Natural killer cell (primary cell): ENCODE measurements at regions of chr19 and their contacts with region 1.

Region 1: DNA sequence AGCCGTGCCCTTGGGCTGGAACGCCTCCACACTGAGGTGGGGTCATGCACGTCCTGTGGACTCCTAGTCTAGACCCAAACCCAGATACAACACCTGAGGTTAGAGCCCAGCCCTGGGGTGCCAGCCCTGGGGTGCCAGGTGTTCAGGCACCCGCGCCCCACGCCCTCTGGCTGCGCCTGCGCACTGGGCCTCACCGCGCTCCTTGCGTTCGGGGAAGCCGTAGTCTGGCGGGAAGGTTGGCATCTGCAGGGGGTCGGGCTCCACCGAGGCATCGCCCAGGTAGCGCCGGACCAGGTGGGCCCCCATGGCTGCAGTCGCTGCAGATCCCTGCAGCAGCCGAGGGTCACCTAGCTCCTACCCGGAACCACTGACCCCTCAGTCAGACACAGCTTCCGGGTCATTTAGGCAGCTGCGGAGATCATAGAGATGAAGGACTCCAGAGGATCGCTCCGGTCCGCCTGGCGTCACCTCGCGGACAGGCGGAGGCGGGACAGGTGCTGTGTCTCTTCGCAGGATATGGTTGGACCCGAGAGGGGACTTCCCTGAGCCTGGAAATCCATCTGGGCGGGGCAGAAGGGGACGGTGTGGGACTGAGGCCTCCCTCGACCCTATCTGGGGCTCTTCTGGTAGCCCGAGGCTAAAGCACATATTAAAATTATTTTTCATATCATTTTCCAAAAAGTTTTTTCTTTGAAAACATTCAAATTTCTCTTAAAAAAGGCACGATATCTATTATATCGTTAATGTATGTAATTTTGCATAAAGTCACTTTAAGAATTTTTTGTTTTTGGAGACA is at the start of gene NDUFB7:
- DNase-seq: peak; percentile 83 to 97
- ATAC-seq: peak; percentile 96 to 99 (median 97)
- H3K4me3 ChIP-seq: peak within 1 kb of the TSS; percentile 82
- H3K4me3 Mint-ChIP-seq: peak within 1 kb of the TSS; percentile 96
- H3K27ac ChIP-seq: peak within 1 kb of the TSS; percentile 21
- H3K27ac Mint-ChIP-seq: peak within 1 kb of the TSS; percentile 87 to 89
- H3K4me1 ChIP-seq: peaks cover 53% of the 10 kb centered on the region
- H3K4me1 Mint-ChIP-seq: peaks cover 32 to 43% of the 10 kb centered on the region in 2 donors
- H3K27me3 ChIP-seq: no peaks in the 10 kb centered on the region
- H3K27me3 Mint-ChIP-seq: no peaks in the 10 kb centered on the region
- CTCF ChIP-seq: peak; percentile 78
- total RNA-seq, gene NDUFB7: 97.1 to 120 (median 108) TPM

Region 2: DNA sequence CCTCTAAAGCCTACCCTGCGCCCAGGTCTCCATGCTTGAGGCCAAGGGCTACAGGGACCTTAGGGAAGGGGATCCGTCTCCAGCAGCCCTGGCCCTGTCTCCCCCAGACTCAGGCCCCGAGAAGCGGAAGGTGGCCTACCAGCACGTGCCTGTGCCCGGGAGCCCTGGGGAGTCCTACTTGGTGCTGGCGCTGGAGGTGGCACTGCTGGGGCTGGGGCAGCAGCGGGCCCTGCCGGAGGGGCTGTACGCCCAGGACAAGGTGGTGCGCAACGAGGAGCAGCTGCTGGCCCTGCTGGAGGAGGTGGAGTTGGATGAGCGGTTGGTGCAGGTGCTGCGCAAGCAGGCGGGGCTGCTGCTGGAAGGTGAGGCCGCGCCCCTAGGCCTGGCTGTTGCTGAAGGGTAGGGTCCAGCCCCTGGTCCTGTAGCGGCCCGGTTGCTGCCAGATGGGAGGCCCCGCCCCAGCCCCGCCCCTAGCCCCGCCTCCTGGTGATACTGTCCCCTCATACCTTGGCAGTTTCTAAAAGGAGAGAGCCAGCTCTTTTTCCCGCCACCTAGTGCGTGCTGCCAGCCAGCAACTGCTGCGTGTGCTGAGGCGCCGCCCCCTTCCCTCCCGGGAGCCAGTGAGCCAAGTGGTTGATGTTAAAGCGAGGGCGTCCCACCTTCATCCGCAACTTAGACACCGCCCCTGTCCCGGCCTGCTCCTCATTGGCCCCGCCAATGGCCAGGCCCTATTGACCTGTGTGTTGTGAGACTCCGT is 754.1 kb before region 1 on chr19:
- intact Hi-C with region 1: no loop called
- DNase-seq: peak in 1 of 2 donors; percentile 49
- ATAC-seq: peak; percentile 24 to 68 (median 66)
- H3K4me3 ChIP-seq: no peak overlapping the region
- H3K4me3 Mint-ChIP-seq: no peak overlapping the region
- H3K27ac ChIP-seq: no peak overlapping the region
- H3K27ac Mint-ChIP-seq: peak overlapping the region in 1 of 2 donors; percentile 49
- H3K4me1 ChIP-seq: no peaks in the 10 kb centered on the region
- H3K4me1 Mint-ChIP-seq: no peaks in the 10 kb centered on the region
- H3K27me3 ChIP-seq: no peaks in the 10 kb centered on the region
- H3K27me3 Mint-ChIP-seq: no peaks in the 10 kb centered on the region
- CTCF ChIP-seq: no peak

Region 3: GRCh38 chr19:14459703-14460102 is 112.2 kb before region 1 on chr19:
- intact Hi-C with region 1: no loop called
- DNase-seq: peak; percentile 74 to 75
- ATAC-seq: peak; percentile 97 to 99 (median 99)
- H3K4me3 ChIP-seq: no peak overlapping the region
- H3K4me3 Mint-ChIP-seq: peak overlapping the region; percentile 82
- H3K27ac ChIP-seq: peak overlapping the region; percentile 76
- H3K27ac Mint-ChIP-seq: peak overlapping the region; percentile 64 to 72
- H3K4me1 ChIP-seq: peaks cover 28% of the 10 kb centered on the region
- H3K4me1 Mint-ChIP-seq: peaks cover 31 to 34% of the 10 kb centered on the region in 2 donors
- H3K27me3 ChIP-seq: no peaks in the 10 kb centered on the region
- H3K27me3 Mint-ChIP-seq: no peaks in the 10 kb centered on the region
- CTCF ChIP-seq: no peak

Region 4: DNA sequence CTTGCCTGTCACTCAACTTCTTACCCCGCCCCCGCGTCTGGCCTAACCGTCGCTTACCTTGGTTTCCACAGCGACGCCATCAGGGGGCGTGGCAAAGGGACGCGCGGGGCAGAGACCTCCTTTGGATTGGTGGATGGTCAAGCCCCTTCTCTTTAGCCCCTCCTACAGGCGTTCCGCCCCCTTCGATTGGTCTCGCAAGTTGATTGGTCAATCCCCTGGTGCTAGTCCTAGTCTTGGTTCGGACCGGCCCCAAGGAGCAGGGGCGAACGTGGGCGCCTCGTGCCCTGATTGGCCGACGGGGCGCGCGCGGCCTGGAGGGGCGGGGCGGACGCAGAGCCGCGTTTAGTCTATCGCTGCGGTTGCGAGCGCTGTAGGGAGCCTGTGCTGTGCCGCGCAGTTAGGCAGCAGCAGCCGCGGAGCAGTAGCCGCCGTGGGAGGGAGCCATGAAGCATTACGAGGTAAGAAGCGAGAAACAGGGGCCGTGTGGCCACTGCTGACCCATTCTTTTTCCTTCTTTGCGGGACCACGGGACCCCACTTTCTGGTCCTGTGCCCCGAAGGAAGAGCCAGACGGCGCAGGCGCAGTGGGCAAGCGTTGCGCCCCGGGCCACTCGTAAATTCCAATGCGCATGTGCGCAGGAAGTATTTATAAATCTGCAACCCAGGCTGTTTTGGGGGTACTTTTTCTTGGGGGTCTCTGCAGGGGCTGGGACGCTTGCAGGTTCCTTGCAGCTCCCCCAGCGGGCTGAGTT is 42.5 kb before region 1 on chr19 and contains the start of gene TECR:
- intact Hi-C with region 1: no loop called
- DNase-seq: peak; percentile 99 to 100
- ATAC-seq: peak; percentile 93 to 99 (median 94)
- H3K4me3 ChIP-seq: peak within 1 kb of the TSS; percentile 64
- H3K4me3 Mint-ChIP-seq: peak within 1 kb of the TSS; percentile 96
- H3K27ac ChIP-seq: peak within 1 kb of the TSS; percentile 86
- H3K27ac Mint-ChIP-seq: peak within 1 kb of the TSS; percentile 95 to 97
- H3K4me1 ChIP-seq: peaks cover 20% of the 10 kb centered on the region
- H3K4me1 Mint-ChIP-seq: peaks cover 9 to 12% of the 10 kb centered on the region in 2 donors
- H3K27me3 ChIP-seq: no peaks in the 10 kb centered on the region
- H3K27me3 Mint-ChIP-seq: no peaks in the 10 kb centered on the region
- CTCF ChIP-seq: no peak
- total RNA-seq, gene TECR: 123 to 158 (median 131) TPM

Region 5: GRCh38 chr19:14686411-14686810 is 114.5 kb after region 1 on chr19:
- intact Hi-C with region 1: loop called (anchors 1 kb)
- DNase-seq: peak in 1 of 2 donors; percentile 50
- ATAC-seq: no peak
- H3K4me3 ChIP-seq: no peak overlapping the region
- H3K4me3 Mint-ChIP-seq: no peak overlapping the region
- H3K27ac ChIP-seq: no peak overlapping the region
- H3K27ac Mint-ChIP-seq: no peak overlapping the region
- H3K4me1 ChIP-seq: peaks cover 16% of the 10 kb centered on the region
- H3K4me1 Mint-ChIP-seq: peaks cover 0 to 16% of the 10 kb centered on the region in 2 donors
- H3K27me3 ChIP-seq: no peaks in the 10 kb centered on the region
- H3K27me3 Mint-ChIP-seq: peaks cover 0 to 4% of the 10 kb centered on the region in 2 donors
- CTCF ChIP-seq: peak; percentile 56

Region 6: DNA sequence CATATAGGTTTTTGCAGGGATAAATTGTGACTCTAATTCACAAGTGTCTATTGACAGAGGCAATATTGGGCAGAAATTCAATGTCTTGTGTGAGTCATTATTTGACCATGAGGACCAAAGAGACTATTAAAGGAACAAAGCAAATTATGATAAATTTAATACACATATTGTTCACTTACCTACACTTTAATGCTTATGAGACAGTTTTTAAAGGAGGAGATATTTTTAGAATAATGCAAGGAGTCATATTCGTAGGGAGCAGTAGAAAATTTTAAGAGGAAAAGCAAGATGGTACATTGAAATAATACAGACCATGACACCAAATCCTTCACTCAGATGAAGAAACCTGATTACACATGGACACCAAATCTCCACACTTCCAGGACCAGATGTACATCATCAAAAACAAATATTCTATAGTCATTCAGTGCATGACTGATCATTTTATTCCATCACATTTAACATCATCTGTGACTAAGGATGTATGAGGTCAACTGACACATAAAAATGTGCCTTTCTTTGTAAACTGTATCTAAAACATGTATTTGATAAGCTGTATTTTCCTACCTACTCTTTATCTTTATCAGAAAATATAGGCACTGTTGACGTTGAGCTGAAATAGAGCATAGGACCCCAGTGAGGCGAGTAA is 318.2 kb after region 1 on chr19:
- intact Hi-C with region 1: loop called (anchors 5 kb)
- DNase-seq: no peak
- ATAC-seq: no peak
- H3K4me3 ChIP-seq: no peak overlapping the region
- H3K4me3 Mint-ChIP-seq: no peak overlapping the region
- H3K27ac ChIP-seq: no peak overlapping the region
- H3K27ac Mint-ChIP-seq: no peak overlapping the region
- H3K4me1 ChIP-seq: no peaks in the 10 kb centered on the region
- H3K4me1 Mint-ChIP-seq: peaks cover 0 to 6% of the 10 kb centered on the region in 2 donors
- H3K27me3 ChIP-seq: no peaks in the 10 kb centered on the region
- H3K27me3 Mint-ChIP-seq: peaks cover 3 to 37% of the 10 kb centered on the region in 2 donors
- CTCF ChIP-seq: no peak